Activated CD8-positive, alpha-beta T cell treated with anti-CD3 and anti-CD28 coated beads for 36 hours (primary cell): ENCODE measurements at regions of chr6 and their contacts with region 1.

Region 1: DNA sequence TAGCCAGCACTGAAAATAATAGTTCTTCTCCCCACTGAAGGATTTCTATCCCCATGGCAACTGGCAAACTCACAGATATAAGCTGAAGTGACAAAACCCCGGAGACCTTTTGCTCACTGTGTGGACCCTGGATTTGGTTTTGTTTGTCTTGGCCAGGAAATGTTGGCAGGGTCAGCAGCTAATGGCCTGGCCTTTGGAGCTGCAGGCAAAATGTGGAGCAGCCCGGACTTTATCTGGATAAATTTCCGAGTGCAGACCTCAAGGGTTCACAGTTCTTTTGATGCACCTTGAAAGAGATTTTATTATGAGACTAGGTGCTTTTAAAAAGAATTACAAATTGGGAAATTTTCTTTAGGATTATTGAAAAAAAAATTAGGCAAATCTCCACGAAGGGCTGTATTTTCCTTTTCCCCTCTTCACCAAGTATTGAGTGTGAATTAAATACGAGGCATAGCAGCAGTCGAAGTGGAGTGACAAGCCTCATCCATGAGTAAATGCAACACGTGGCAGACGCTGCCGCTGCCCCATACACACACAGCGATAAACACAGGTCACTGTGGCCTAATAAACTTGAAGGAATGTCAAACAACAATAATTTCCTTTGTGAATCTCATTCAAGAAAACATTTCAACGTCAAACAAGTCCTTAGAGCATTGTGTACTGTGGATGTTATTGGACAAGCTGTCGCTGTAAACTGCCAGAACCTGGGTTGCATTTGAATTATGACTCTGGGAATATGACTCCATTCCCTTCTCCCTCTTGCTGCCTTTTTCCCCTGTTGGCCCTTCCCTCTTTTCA is 35.1 kb upstream of the CCN6 start:
- DNase-seq: no peak
- ATAC-seq: no peak
- H3K4me3 Mint-ChIP-seq: no peak overlapping the region
- H3K27ac Mint-ChIP-seq: no peak overlapping the region
- H3K4me1 Mint-ChIP-seq: peaks cover 50% of the 10 kb centered on the region
- H3K27me3 Mint-ChIP-seq: no peaks in the 10 kb centered on the region
- CTCF ChIP-seq: no peak

Region 2: GRCh38 chr6:111909238-111909637 is 109.6 kb before region 1 on chr6:
- CTCF ChIA-PET with region 1: no interaction called
- POLR2A ChIA-PET with region 1: no interaction called
- intact Hi-C with region 1: no loop called
- DNase-seq: no peak
- ATAC-seq: no peak
- H3K4me3 Mint-ChIP-seq: no peak overlapping the region
- H3K27ac Mint-ChIP-seq: no peak overlapping the region
- H3K4me1 Mint-ChIP-seq: peaks cover 9% of the 10 kb centered on the region
- H3K27me3 Mint-ChIP-seq: no peaks in the 10 kb centered on the region
- CTCF ChIP-seq: no peak

Region 3: DNA sequence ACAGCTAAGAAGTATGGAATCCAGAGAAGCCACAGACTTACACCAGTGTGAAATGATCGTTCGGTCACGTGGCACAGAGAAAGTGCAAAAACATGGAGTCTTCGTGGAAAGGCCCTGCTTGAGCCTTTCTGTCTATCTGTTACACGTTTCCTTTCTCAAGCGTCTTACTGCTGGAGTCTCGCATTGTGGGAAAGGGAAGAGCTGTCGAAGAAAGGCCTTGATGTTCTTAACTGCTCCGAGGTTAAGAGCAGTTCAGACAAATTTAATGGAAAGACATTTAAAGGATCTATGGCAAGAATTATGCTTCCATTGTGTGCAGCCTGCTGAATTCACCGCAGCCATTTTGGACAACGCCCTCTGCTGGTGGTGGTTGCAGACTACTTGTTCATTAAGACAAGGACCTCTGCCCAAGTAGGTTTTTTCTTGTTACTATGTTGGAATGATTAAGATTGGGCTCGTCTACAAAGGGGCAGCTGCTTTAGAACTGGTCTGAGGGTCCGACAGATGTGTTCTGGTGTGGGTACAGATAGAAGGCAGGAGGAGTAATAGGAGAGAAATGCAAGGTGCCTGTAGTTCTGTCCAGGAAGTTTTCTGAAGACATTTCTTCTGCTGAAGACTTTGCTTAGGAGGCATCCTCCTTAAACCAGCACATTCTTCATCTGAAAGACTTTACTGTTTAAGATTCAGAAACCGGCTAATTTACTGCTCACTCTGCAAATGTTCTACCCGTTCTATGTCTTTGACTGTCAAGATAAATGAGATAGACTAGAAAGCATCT is 10.4 kb after region 1 on chr6:
- CTCF ChIA-PET with region 1: interaction called, 59 read pairs
- POLR2A ChIA-PET with region 1: interaction called, 16 read pairs
- intact Hi-C with region 1: loop called (anchors 2 kb)
- DNase-seq: peak; percentile 88
- ATAC-seq: no peak
- H3K4me3 Mint-ChIP-seq: no peak overlapping the region
- H3K27ac Mint-ChIP-seq: peak overlapping the region; percentile 92
- H3K4me1 Mint-ChIP-seq: peaks cover 71% of the 10 kb centered on the region
- H3K27me3 Mint-ChIP-seq: no peaks in the 10 kb centered on the region
- CTCF ChIP-seq: peak; percentile 91

Region 4: DNA sequence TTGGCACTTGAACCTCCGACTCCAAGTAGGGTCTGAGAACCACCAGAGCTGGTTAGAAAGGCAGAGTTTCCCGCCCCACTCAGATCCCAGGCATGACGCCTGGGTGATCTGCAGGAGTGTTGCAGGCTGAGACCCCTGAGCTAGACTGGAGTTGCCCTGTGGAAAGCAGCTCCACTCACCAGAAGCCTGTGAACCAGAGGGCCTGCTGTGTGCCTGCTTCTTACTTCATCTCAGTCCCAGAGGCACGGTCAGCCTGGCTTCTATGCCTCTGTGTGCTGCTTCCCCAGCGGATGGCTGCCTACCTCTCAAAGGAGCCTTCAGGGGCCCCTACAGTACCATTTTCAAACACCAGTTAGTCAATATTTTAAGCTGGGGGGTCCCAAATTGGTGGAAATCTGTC is 19.4 kb after region 1 on chr6:
- CTCF ChIA-PET with region 1: interaction called, 16 read pairs
- POLR2A ChIA-PET with region 1: interaction called, 7 read pairs
- intact Hi-C with region 1: loop called (anchors 2 kb)
- DNase-seq: no peak
- ATAC-seq: no peak
- H3K4me3 Mint-ChIP-seq: no peak overlapping the region
- H3K27ac Mint-ChIP-seq: peak overlapping the region; percentile 36
- H3K4me1 Mint-ChIP-seq: peaks cover 72% of the 10 kb centered on the region
- H3K27me3 Mint-ChIP-seq: no peaks in the 10 kb centered on the region
- CTCF ChIP-seq: no peak